Left ventricle myocardium inferior (tissue), 1 donor: ENCODE measurements at regions of chr16 and their contacts with region 1.

Region 1: GRCh38 chr16:76724181-76724580 is 447.0 kb downstream of the CNTNAP4 start:
- DNase-seq: no peak
- H3K4me3 ChIP-seq: no peak overlapping the region
- H3K27ac ChIP-seq: no peak overlapping the region
- H3K4me1 ChIP-seq: no peaks in the 10 kb centered on the region
- H3K27me3 ChIP-seq: no peaks in the 10 kb centered on the region
- CTCF ChIP-seq: no peak

Region 2: GRCh38 chr16:76681296-76681695 is 42.9 kb before region 1 on chr16:
- intact Hi-C with region 1: loop called (anchors 2 kb)
- DNase-seq: no peak
- H3K4me3 ChIP-seq: no peak overlapping the region
- H3K27ac ChIP-seq: no peak overlapping the region
- H3K4me1 ChIP-seq: no peaks in the 10 kb centered on the region
- H3K27me3 ChIP-seq: peaks cover 5% of the 10 kb centered on the region
- CTCF ChIP-seq: no peak

Region 3: DNA sequence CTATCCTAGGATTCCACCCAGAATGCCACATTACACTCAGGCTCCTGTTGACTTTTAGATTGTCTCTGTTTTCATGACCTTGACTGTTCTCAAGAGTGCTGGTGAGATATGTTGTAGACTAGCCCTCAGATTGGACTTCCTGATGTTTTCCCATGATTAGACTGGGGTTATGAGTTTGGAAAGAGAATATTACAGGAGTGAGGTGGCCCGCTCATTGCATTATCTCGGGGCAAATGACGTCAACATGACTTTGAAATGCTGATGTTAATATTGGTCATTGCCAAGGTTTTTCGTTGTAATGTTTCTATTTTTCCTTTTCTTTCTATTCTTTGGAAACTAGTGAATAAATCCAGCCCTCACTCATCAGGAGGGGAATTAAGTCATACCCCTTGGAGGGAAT is 111.2 kb after region 1 on chr16:
- intact Hi-C with region 1: no loop called
- DNase-seq: no peak
- H3K4me3 ChIP-seq: no peak overlapping the region
- H3K27ac ChIP-seq: no peak overlapping the region
- H3K4me1 ChIP-seq: no peaks in the 10 kb centered on the region
- H3K27me3 ChIP-seq: no peaks in the 10 kb centered on the region
- CTCF ChIP-seq: no peak